Naive thymus-derived CD4-positive, alpha-beta T cell (primary cell): ENCODE measurements at regions of chr3 and their contacts with region 1.

Region 1: GRCh38 chr3:148943506-148944205 is 47.7 kb upstream of the GYG1 start:
- DNase-seq: peak in 5 of 9 donors; percentile 7 to 52 (median 29)
- ATAC-seq: peak; percentile 90
- H3K4me3 ChIP-seq: no peak overlapping the region
- H3K4me3 Mint-ChIP-seq: no peak overlapping the region
- H3K27ac ChIP-seq: no peak overlapping the region
- H3K27ac Mint-ChIP-seq: no peak overlapping the region
- H3K4me1 ChIP-seq: no peaks in the 10 kb centered on the region
- H3K4me1 Mint-ChIP-seq: peaks cover 0 to 4% (median 0%) of the 10 kb centered on the region in 7 donors
- H3K27me3 ChIP-seq: no peaks in the 10 kb centered on the region
- H3K27me3 Mint-ChIP-seq: peaks cover 0 to 5% (median 4%) of the 10 kb centered on the region in 5 donors

Region 2: DNA sequence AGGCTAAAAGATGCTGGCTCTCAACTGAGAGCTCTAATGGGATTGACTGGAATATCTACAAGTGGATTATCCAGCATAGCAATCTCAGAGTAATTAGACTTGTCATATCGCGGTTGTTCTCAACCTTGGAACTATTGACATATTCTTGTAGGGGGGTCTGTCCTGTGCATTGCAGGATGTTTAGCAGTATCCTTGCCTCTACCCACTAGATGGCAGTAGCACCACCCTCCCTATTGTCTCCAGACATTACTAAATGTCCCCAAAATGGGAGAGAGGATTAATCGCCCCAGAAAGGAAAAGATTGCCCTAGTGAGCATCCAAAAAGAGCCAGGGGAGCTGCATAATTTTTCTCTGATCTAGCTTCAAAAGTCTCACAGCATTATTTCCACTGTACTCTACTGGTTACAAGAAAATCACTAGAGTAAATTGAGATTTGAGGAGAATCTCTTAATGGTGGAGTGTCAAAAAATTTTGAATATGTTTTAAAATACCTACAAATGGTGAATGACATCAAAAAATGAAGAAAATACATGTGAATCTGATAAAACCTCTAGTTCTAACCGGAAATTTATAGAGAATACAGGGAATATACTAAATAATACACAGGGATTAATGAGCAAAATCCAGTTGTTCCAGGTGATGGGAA is 634.1 kb before region 1 on chr3:
- CTCF ChIA-PET with region 1: no interaction called
- POLR2A ChIA-PET with region 1: no interaction called
- intact Hi-C with region 1: loop called in 1 of 2 experiments (anchors 2 kb)
- DNase-seq: no peak
- ATAC-seq: peak; percentile 36
- H3K4me3 ChIP-seq: no peak overlapping the region
- H3K4me3 Mint-ChIP-seq: no peak overlapping the region
- H3K27ac ChIP-seq: no peak overlapping the region
- H3K27ac Mint-ChIP-seq: no peak overlapping the region
- H3K4me1 ChIP-seq: no peaks in the 10 kb centered on the region
- H3K4me1 Mint-ChIP-seq: no peaks in the 10 kb centered on the region
- H3K27me3 ChIP-seq: no peaks in the 10 kb centered on the region
- H3K27me3 Mint-ChIP-seq: no peaks in the 10 kb centered on the region

Region 3: GRCh38 chr3:148861277-148861869 is 82.3 kb before region 1 on chr3:
- CTCF ChIA-PET with region 1: interaction called, 3 read pairs
- POLR2A ChIA-PET with region 1: no interaction called
- intact Hi-C with region 1: loop called (anchors 1 kb)
- DNase-seq: peak in 5 of 9 donors; percentile 4 to 35 (median 14)
- ATAC-seq: peak; percentile 72
- H3K4me3 ChIP-seq: no peak overlapping the region
- H3K4me3 Mint-ChIP-seq: no peak overlapping the region
- H3K27ac ChIP-seq: no peak overlapping the region
- H3K27ac Mint-ChIP-seq: no peak overlapping the region
- H3K4me1 ChIP-seq: no peaks in the 10 kb centered on the region
- H3K4me1 Mint-ChIP-seq: no peaks in the 10 kb centered on the region
- H3K27me3 ChIP-seq: peaks cover 0 to 3% of the 10 kb centered on the region in 2 donors
- H3K27me3 Mint-ChIP-seq: peaks cover 4 to 22% (median 13%) of the 10 kb centered on the region in 5 donors